Motor neuron (in vitro differentiated cells): ENCODE measurements at regions of chr5 and their contacts with region 1.

Region 1: GRCh38 chr5:926417-927171 is 33.9 kb downstream of the TRIP13 start:
- ATAC-seq: peak; percentile 62 to 93 (median 83)
- H3K4me3 ChIP-seq: peak overlapping the region; percentile 8 to 28 (median 17)
- H3K27ac ChIP-seq: no peak overlapping the region
- H3K4me1 ChIP-seq: peaks cover 3 to 6% of the 10 kb centered on the region in 2 donors

Region 2: GRCh38 chr5:1140171-1140817 is 213.7 kb after region 1 on chr5:
- in situ Hi-C with region 1: loop called in 5 of 9 experiments (anchors 25 kb)
- ATAC-seq: peak in 7 of 8 experiments; percentile 53 to 87 (median 76)
- H3K4me3 ChIP-seq: no peak overlapping the region
- H3K27ac ChIP-seq: no peak overlapping the region
- H3K4me1 ChIP-seq: peaks cover 2 to 20% of the 10 kb centered on the region in 2 donors

Region 3: DNA sequence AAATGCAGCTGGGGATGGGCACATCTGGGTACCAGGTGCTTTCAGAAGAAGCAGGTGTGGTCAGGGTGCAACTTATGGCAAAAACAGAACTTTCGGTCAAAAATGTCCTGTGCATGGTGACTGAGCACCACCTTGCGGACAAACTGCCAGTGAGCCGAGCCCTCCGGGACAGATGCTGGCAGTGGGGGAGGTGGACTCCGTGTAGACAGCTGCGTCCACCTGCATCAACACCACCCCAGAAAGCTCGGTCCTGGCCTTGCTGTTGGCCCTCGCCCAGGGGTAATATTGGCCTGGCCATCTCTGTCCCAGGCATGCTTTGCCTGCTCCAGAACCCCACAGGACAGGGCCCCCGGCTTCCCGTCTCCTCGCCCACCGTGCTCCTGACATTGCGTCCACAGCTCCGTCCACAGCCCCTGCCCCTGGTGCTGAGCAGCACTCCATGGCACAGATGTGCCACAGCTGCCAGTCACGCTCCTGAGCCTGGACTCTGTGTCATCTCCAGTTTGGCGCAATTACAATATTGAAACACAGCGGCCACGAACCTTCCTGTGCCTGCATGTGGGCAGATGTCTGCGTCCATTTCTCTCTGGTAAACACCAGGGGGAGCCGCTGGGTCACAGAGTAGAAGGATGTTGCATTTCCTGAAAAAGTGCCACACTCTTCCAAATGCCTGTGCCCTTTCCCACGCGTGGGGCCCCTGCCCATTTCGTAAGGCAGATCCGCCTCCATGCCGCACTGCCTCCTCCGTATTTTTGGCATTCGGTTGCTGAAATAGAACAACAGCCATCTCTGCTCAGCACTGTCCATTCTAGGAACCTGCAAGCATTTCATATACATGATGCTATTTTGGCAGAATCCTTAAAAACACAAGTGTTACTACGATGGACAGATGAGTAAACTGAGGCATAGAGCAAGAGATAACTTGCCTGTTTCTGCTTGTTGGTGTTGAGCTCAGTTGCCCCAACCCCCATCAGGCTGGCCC is 241.4 kb after region 1 on chr5:
- in situ Hi-C with region 1: loop called in 2 of 9 experiments (anchors 25 kb)
- ATAC-seq: peak; percentile 88 to 95 (median 89)
- H3K4me3 ChIP-seq: peak overlapping the region; percentile 16 to 29 (median 22)
- H3K27ac ChIP-seq: no peak overlapping the region
- H3K4me1 ChIP-seq: peaks cover 0 to 3% of the 10 kb centered on the region in 2 donors